HCT116 (cell line): ENCODE measurements at regions of chr5 and their contacts with region 1.

Region 1: GRCh38 chr5:143403593-143404415 is at the start of gene NR3C1:
- DNase-seq: no peak
- ATAC-seq: peak; percentile 81
- H3K4me3 ChIP-seq: peak within 1 kb of the TSS; percentile 66 to 77
- H3K27ac ChIP-seq: peak within 1 kb of the TSS; percentile 77
- H3K4me1 ChIP-seq: peaks cover 9 to 14% of the 10 kb centered on the region in 2 experiments; a peak in 2 of 4 replicates
- H3K27me3 ChIP-seq: no peaks in the 10 kb centered on the region
- CTCF ChIP-seq: peak in 2 of 3 experiments; percentile 4 to 46; a peak in 2 of 6 replicates
- POLR2A ChIP-seq: no peak
- RAD21 ChIP-seq: peak; percentile 49
- total RNA-seq, gene NR3C1: 16.0 TPM

Region 2: DNA sequence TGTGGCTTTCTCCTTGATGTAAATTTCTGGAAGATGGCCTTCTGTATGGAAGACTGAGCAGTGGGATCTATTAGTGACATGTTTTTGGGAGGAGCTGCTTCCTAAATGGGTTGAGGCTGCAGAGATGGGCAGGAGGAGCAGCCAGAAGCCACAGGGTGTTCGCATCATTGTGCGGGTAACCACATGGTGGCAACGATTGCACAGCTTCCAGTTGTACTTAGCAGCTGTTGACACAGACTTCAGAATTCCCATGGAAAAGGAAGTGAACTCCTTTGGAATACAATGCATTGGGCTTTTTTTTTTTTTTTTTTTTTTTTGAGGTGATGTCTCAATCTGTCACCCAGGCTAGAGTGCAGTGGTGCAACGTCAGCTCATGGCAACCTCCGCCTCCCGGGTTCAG is 297.6 kb before region 1 on chr5:
- CTCF ChIA-PET with region 1: interaction called, 6 read pairs
- POLR2A ChIA-PET with region 1: no interaction called
- RAD21 ChIA-PET with region 1: no interaction called
- intact Hi-C with region 1: loop called (anchors 2 kb)
- DNase-seq: no peak
- ATAC-seq: peak; percentile 77
- H3K4me3 ChIP-seq: no peak overlapping the region
- H3K27ac ChIP-seq: no peak overlapping the region
- H3K4me1 ChIP-seq: peaks cover 7 to 14% of the 10 kb centered on the region in 2 experiments; a peak in 2 of 4 replicates
- H3K27me3 ChIP-seq: no peaks in the 10 kb centered on the region
- CTCF ChIP-seq: peak; percentile 31 to 49 (median 36); a peak in 2 of 6 replicates
- POLR2A ChIP-seq: no peak
- RAD21 ChIP-seq: peak; percentile 81

Region 3: GRCh38 chr5:143200781-143201398 is 202.9 kb before region 1 on chr5:
- CTCF ChIA-PET with region 1: no interaction called
- POLR2A ChIA-PET with region 1: no interaction called
- RAD21 ChIA-PET with region 1: no interaction called
- intact Hi-C with region 1: loop called (anchors 5 kb)
- DNase-seq: no peak
- ATAC-seq: peak; percentile 68
- H3K4me3 ChIP-seq: no peak overlapping the region
- H3K27ac ChIP-seq: no peak overlapping the region
- H3K4me1 ChIP-seq: peaks cover 2 to 8% of the 10 kb centered on the region in 2 experiments; a peak in 1 of 4 replicates
- H3K27me3 ChIP-seq: no peaks in the 10 kb centered on the region
- CTCF ChIP-seq: no peak
- POLR2A ChIP-seq: no peak
- RAD21 ChIP-seq: no peak

Region 4: GRCh38 chr5:143244000-143244736 is 159.6 kb before region 1 on chr5:
- CTCF ChIA-PET with region 1: no interaction called
- POLR2A ChIA-PET with region 1: no interaction called
- RAD21 ChIA-PET with region 1: no interaction called
- intact Hi-C with region 1: loop called (anchors 2 kb)
- DNase-seq: peak; percentile 82
- ATAC-seq: peak; percentile 69
- H3K4me3 ChIP-seq: peak overlapping the region; percentile 8 to 45; a peak in 2 of 4 replicates
- H3K27ac ChIP-seq: peak overlapping the region; percentile 77
- H3K4me1 ChIP-seq: peaks cover 51 to 76% of the 10 kb centered on the region in 2 experiments
- H3K27me3 ChIP-seq: no peaks in the 10 kb centered on the region
- CTCF ChIP-seq: no peak
- POLR2A ChIP-seq: peak; percentile 45
- RAD21 ChIP-seq: no peak